Psoas muscle (tissue), 8 donors: ENCODE measurements at regions of chr3 and their contacts with region 1.

Region 1: GRCh38 chr3:66450390-66451022 is 50.3 kb downstream of the LRIG1 start:
- DNase-seq: peak; percentile 49 to 85
- ATAC-seq: peak; percentile 52 to 67 (median 54)
- H3K4me3 ChIP-seq: peak overlapping the region; percentile 38
- H3K27ac ChIP-seq: peak overlapping the region; percentile 84
- H3K4me1 ChIP-seq: peaks cover 82% of the 10 kb centered on the region
- H3K27me3 ChIP-seq: no peaks in the 10 kb centered on the region
- CTCF ChIP-seq: no peak

Region 2: GRCh38 chr3:66297900-66298299 is 152.6 kb before region 1 on chr3:
- intact Hi-C with region 1: no loop called
- DNase-seq: no peak
- ATAC-seq: peak in 2 of 4 donors; percentile 41 to 58
- H3K4me3 ChIP-seq: no peak overlapping the region
- H3K27ac ChIP-seq: no peak overlapping the region
- H3K4me1 ChIP-seq: peaks cover 25% of the 10 kb centered on the region
- H3K27me3 ChIP-seq: no peaks in the 10 kb centered on the region
- CTCF ChIP-seq: no peak

Region 3: GRCh38 chr3:66490214-66490613 is 39.7 kb after region 1 on chr3:
- intact Hi-C with region 1: loop called in 1 of 2 experiments (anchors 5 kb)
- DNase-seq: no peak
- ATAC-seq: peak in 3 of 4 donors; percentile 27 to 57 (median 51)
- H3K4me3 ChIP-seq: no peak overlapping the region
- H3K27ac ChIP-seq: peak overlapping the region; percentile 90
- H3K4me1 ChIP-seq: peaks cover 88% of the 10 kb centered on the region
- H3K27me3 ChIP-seq: no peaks in the 10 kb centered on the region
- CTCF ChIP-seq: no peak